T-cell (primary cell): ENCODE measurements at regions of chr3 and their contacts with region 1.

Region 1: DNA sequence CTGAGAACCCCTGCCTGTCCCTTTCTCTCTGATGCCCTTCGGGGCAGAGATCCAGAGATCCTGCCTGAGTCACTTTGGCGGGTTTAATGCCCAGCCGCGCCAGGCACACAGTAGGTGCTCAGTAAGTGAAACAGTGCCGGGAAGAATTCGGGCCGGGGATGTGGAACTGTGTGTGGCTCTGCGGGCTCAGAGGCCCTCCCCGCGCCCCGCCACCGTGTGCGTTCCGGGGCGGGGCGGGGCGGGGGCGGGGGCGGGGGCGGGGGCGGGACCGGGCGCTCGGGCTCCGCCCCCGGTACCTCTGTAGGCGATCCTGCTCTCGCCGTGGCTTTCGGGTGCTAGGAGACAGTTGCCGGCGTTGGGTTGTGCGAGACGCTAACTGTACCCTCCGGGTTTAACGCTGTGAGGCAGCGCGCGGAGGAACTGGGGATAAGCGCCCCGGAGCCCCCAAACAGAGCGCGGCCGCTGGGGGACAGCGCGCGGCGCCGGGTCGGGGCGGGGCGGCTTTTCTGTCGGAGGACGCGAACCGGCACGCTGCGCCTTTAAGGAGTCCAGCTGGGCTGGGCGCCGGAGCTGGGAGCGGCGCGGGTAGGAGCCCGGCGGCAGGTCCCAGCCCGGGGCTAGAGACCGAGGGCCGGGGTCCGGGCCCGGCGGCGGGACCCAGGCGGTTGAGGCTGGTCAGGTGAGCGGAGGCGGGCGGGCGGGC is at the start of gene ABHD6:
- DNase-seq: peak; percentile 37 to 87 (median 74)
- ATAC-seq: peak; percentile 85 to 91 (median 89)
- H3K4me3 ChIP-seq: peak within 1 kb of the TSS; percentile 85 to 92
- H3K4me3 Mint-ChIP-seq: peak within 1 kb of the TSS; percentile 89 to 91 (median 90)
- H3K27ac ChIP-seq: peak within 1 kb of the TSS; percentile 14
- H3K27ac Mint-ChIP-seq: peak within 1 kb of the TSS; percentile 81 to 85
- H3K4me1 ChIP-seq: peaks cover 4 to 21% of the 10 kb centered on the region in 2 experiments
- H3K4me1 Mint-ChIP-seq: peaks cover 10 to 17% (median 14%) of the 10 kb centered on the region in 3 donors
- H3K27me3 ChIP-seq: peaks cover 0 to 22% of the 10 kb centered on the region in 2 experiments
- H3K27me3 Mint-ChIP-seq: peaks cover 8 to 12% of the 10 kb centered on the region in 2 donors
- total RNA-seq, gene ABHD6: 3.9 to 7.0 (median 5.5) TPM

Region 2: GRCh38 chr3:58023531-58023930 is 213.9 kb before region 1 on chr3:
- CTCF ChIA-PET with region 1: interaction called in 1 of 2 experiments, 14 read pairs
- POLR2A ChIA-PET with region 1: no interaction called
- DNase-seq: no peak
- ATAC-seq: no peak
- H3K4me3 ChIP-seq: no peak overlapping the region
- H3K4me3 Mint-ChIP-seq: no peak overlapping the region
- H3K27ac ChIP-seq: no peak overlapping the region
- H3K27ac Mint-ChIP-seq: no peak overlapping the region
- H3K4me1 ChIP-seq: peaks cover 5 to 10% of the 10 kb centered on the region in 2 experiments
- H3K4me1 Mint-ChIP-seq: peaks cover 40 to 62% (median 45%) of the 10 kb centered on the region in 3 donors
- H3K27me3 ChIP-seq: no peaks in the 10 kb centered on the region
- H3K27me3 Mint-ChIP-seq: no peaks in the 10 kb centered on the region

Region 3: GRCh38 chr3:58553003-58553402 is 315.6 kb after region 1 on chr3:
- CTCF ChIA-PET with region 1: no interaction called
- POLR2A ChIA-PET with region 1: no interaction called
- DNase-seq: no peak
- ATAC-seq: no peak
- H3K4me3 ChIP-seq: no peak overlapping the region
- H3K4me3 Mint-ChIP-seq: no peak overlapping the region
- H3K27ac ChIP-seq: no peak overlapping the region
- H3K27ac Mint-ChIP-seq: no peak overlapping the region
- H3K4me1 ChIP-seq: no peaks in the 10 kb centered on the region
- H3K4me1 Mint-ChIP-seq: no peaks in the 10 kb centered on the region
- H3K27me3 ChIP-seq: no peaks in the 10 kb centered on the region
- H3K27me3 Mint-ChIP-seq: peaks cover 2 to 19% of the 10 kb centered on the region in 2 donors